ENCODE measurements at regions of chr20 and their contacts with region 1.

Region 1: GRCh38 chr20:4613718-4614620 is 107.7 kb upstream of the PRND start:
- DNase-seq: peak; percentile 67
- ATAC-seq: peak; percentile 85
- H3K4me3 Mint-ChIP-seq: no peak overlapping the region
- H3K27ac Mint-ChIP-seq: no peak overlapping the region
- H3K4me1 Mint-ChIP-seq: peaks cover 9% of the 10 kb centered on the region
- H3K27me3 Mint-ChIP-seq: no peaks in the 10 kb centered on the region
- CTCF ChIP-seq: 0 out of 2 replicates have a peak, but pooled peaks have one; percentile 30

Region 2: DNA sequence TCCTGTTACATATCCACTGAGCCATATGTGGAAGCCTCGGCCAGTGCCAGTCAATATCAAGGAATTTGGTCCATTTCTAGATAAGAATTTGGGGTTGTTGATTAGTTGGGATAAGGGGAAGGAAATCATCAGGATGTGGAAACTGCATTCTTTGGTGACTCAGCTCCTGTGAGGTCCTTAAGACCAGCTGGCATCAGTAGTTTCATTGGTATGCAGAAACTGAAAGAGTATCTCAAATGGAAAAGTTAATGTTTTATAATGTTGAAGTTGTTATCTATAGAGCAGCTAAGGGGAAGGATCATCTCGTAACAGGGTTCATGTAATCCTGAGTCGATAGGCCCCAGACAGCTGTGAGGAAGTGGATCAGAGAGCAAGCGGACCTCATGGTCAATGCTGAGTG is 19.8 kb after region 1 on chr20:
- CTCF ChIA-PET with region 1: interaction called, 10 read pairs
- POLR2A ChIA-PET with region 1: no interaction called
- DNase-seq: no peak
- ATAC-seq: no peak
- H3K4me3 Mint-ChIP-seq: no peak overlapping the region
- H3K27ac Mint-ChIP-seq: no peak overlapping the region
- H3K4me1 Mint-ChIP-seq: no peaks in the 10 kb centered on the region
- H3K27me3 Mint-ChIP-seq: no peaks in the 10 kb centered on the region; the same call in 1 of the 2 replicates
- CTCF ChIP-seq: no peak

Region 3: DNA sequence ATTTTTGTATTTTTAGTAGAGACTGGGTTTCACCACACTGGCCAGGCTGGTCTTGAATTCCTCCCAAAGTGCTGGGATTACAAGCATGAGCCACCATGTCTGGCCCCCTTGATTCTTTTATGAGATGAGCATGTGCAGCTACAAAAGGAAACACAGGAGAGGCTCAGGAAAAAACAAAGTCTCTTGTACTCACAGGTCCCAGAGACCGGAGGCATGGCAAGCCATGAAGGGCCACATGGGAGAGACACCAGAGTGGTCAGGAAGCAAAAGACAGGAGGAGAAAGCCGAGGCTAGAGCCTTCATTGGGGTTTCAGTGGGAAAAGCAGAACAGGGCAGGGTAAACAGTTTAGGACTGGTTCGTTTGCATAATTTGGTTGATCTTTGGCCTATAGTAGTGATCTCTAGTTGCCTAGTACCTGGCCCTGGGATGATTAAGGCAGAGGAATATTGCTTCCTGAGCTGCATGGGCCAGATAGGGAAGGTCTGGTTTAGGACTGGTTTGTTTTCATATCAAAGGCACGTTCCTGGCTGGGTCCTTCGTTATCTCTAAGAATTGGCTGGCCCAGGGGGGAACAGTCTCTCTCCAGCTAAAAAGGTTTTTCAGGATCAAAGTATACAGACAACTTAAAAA is 59.5 kb after region 1 on chr20:
- CTCF ChIA-PET with region 1: no interaction called
- POLR2A ChIA-PET with region 1: no interaction called
- DNase-seq: no peak
- ATAC-seq: no peak
- H3K4me3 Mint-ChIP-seq: no peak overlapping the region
- H3K27ac Mint-ChIP-seq: no peak overlapping the region
- H3K4me1 Mint-ChIP-seq: peaks cover 18% of the 10 kb centered on the region
- H3K27me3 Mint-ChIP-seq: no peaks in the 10 kb centered on the region; the same call in 1 of the 2 replicates
- CTCF ChIP-seq: no peak

Region 4: GRCh38 chr20:4720041-4720976 is 106.3 kb after region 1 on chr20:
- CTCF ChIA-PET with region 1: interaction called, 55 read pairs
- POLR2A ChIA-PET with region 1: no interaction called
- DNase-seq: peak; percentile 75
- ATAC-seq: peak; percentile 78
- H3K4me3 Mint-ChIP-seq: 0 out of 2 replicates have a peak overlapping the region, but pooled peaks have one; percentile 4
- H3K27ac Mint-ChIP-seq: peak overlapping the region; percentile 90
- H3K4me1 Mint-ChIP-seq: peaks cover 20% of the 10 kb centered on the region
- H3K27me3 Mint-ChIP-seq: no peaks in the 10 kb centered on the region
- CTCF ChIP-seq: peak; percentile 48

Region 5: DNA sequence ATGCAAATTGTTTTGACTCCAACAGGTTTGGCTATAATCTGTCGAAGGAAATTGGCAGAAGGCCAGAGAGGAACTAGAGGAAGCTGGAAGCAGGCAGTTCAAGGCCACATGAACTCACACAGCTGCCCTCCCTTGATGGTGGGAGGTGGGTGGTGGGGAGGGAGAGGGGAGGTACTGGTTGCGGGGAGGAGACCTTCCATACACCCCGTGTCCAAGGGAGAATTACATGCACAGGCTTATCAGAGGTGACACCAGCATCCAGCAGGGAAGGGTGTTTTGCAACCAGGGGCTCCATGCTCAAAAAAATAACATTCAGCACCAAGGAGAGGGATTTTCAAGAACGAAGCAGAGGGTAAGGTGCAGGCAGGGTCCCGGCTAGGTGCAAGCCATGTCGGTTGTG is 116.8 kb after region 1 on chr20:
- CTCF ChIA-PET with region 1: interaction called, 10 read pairs
- POLR2A ChIA-PET with region 1: no interaction called
- DNase-seq: no peak
- ATAC-seq: no peak; the same call in none of the 2 replicates
- H3K4me3 Mint-ChIP-seq: no peak overlapping the region
- H3K27ac Mint-ChIP-seq: no peak overlapping the region
- H3K4me1 Mint-ChIP-seq: peaks cover 32% of the 10 kb centered on the region
- H3K27me3 Mint-ChIP-seq: no peaks in the 10 kb centered on the region
- CTCF ChIP-seq: no peak